Heart right ventricle (tissue), 16 donors: ENCODE measurements at regions of chr9 and their contacts with region 1.

Region 1: GRCh38 chr9:100098887-100099721 is at the starts of genes ERP44 and INVS:
- DNase-seq: peak; percentile 97 to 100
- ATAC-seq: peak; percentile 99 to 100 (median 99)
- H3K4me3 ChIP-seq: peak within 1 kb of the TSS; percentile 75 to 99 (median 92)
- H3K27ac ChIP-seq: peak within 1 kb of the TSS; percentile 80 to 95 (median 92)
- H3K4me1 ChIP-seq: peaks cover 0 to 39% (median 34%) of the 10 kb centered on the region in 9 donors
- H3K27me3 ChIP-seq: no peaks in the 10 kb centered on the region
- CTCF ChIP-seq: no peak
- total RNA-seq, gene ERP44: 11.9 to 19.8 (median 14.8) TPM
- total RNA-seq, gene INVS: 4.7 to 8.0 (median 6.3) TPM

Region 2: GRCh38 chr9:99221621-99222415 is 877.3 kb before region 1 on chr9 and contains the starts of genes ALG2 and SEC61B:
- intact Hi-C with region 1: loop called in 1 of 10 experiments (anchors 10 kb)
- DNase-seq: peak; percentile 93 to 97
- ATAC-seq: peak; percentile 98 to 99 (median 99)
- H3K4me3 ChIP-seq: peak within 1 kb of the TSS; percentile 65 to 97 (median 88)
- H3K27ac ChIP-seq: peak within 1 kb of the TSS; percentile 87 to 96 (median 93)
- H3K4me1 ChIP-seq: peaks cover 14 to 85% (median 72%) of the 10 kb centered on the region in 9 donors
- H3K27me3 ChIP-seq: no peaks in the 10 kb centered on the region
- CTCF ChIP-seq: peak in 1 of 9 donors; percentile 21
- total RNA-seq, gene ALG2: 10.6 to 27.3 (median 15.0) TPM
- total RNA-seq, gene SEC61B: 24.1 to 72.6 (median 32.9) TPM

Region 3: GRCh38 chr9:100028201-100028784 is 70.8 kb before region 1 on chr9:
- intact Hi-C with region 1: loop called in 1 of 10 experiments (anchors 10 kb)
- DNase-seq: peak; percentile 50 to 74
- ATAC-seq: peak; percentile 78 to 95 (median 91)
- H3K4me3 ChIP-seq: no peak overlapping the region
- H3K27ac ChIP-seq: no peak overlapping the region
- H3K4me1 ChIP-seq: peaks cover 0 to 18% (median 0%) of the 10 kb centered on the region in 9 donors
- H3K27me3 ChIP-seq: no peaks in the 10 kb centered on the region
- CTCF ChIP-seq: peak; percentile 78 to 98 (median 94)

Region 4: GRCh38 chr9:100066539-100066938 is 32.6 kb before region 1 on chr9:
- intact Hi-C with region 1: loop called in 1 of 10 experiments (anchors 5 kb)
- DNase-seq: peak in 1 of 2 donors; percentile 40
- ATAC-seq: peak in 7 of 8 donors; percentile 69 to 91 (median 81)
- H3K4me3 ChIP-seq: peak overlapping the region in 6 of 10 donors; percentile 1 to 21 (median 14)
- H3K27ac ChIP-seq: peak overlapping the region in 5 of 10 donors; percentile 1 to 39 (median 23)
- H3K4me1 ChIP-seq: peaks cover 0 to 41% (median 26%) of the 10 kb centered on the region in 9 donors
- H3K27me3 ChIP-seq: no peaks in the 10 kb centered on the region
- CTCF ChIP-seq: no peak

Region 5: DNA sequence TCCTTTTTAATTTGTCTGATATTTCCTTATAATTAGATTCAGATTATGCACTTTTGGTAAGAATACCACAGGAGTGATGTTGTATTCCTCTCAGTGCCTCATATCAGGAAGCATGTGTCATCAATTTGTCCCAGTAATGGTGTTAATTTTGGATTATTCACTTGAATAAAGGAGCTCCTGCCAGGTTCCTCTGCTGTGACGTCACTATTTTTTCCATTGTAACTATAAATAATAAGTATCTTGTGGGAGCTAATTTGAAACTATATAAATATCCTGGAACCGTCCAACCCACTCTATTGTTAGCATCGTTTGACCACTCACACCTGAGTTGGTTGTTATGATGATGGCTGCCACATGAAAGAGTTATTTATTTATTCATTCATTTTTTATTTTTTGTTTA is 107.8 kb after region 1 on chr9:
- intact Hi-C with region 1: loop called in 2 of 10 experiments (anchors 10 kb)
- DNase-seq: peak in 1 of 2 donors; percentile 46
- ATAC-seq: peak in 6 of 8 donors; percentile 79 to 92 (median 92)
- H3K4me3 ChIP-seq: no peak overlapping the region
- H3K27ac ChIP-seq: peak overlapping the region in 3 of 10 donors; percentile 20 to 33 (median 29)
- H3K4me1 ChIP-seq: peaks cover 0 to 27% (median 12%) of the 10 kb centered on the region in 9 donors
- H3K27me3 ChIP-seq: no peaks in the 10 kb centered on the region
- CTCF ChIP-seq: no peak

Region 6: GRCh38 chr9:100216178-100216787 is 117.2 kb after region 1 on chr9:
- intact Hi-C with region 1: loop called in 1 of 10 experiments (anchors 10 kb)
- DNase-seq: peak in 1 of 2 donors; percentile 54
- ATAC-seq: peak in 6 of 8 donors; percentile 48 to 70 (median 58)
- H3K4me3 ChIP-seq: no peak overlapping the region
- H3K27ac ChIP-seq: no peak overlapping the region
- H3K4me1 ChIP-seq: peaks cover 0 to 14% (median 0%) of the 10 kb centered on the region in 9 donors
- H3K27me3 ChIP-seq: no peaks in the 10 kb centered on the region
- CTCF ChIP-seq: peak; percentile 44 to 75 (median 62)